Caco-2 (cell line): ENCODE measurements at regions of chr6 and their contacts with region 1.

Region 1: GRCh38 chr6:75029333-75029732 is 176.5 kb downstream of the COL12A1 start:
- DNase-seq: no peak
- H3K4me3 ChIP-seq: no peak overlapping the region
- H3K4me3 Mint-ChIP-seq: no peak overlapping the region
- H3K27ac Mint-ChIP-seq: no peak overlapping the region
- H3K4me1 ChIP-seq: no peaks in the 10 kb centered on the region
- H3K4me1 Mint-ChIP-seq: no peaks in the 10 kb centered on the region
- H3K27me3 ChIP-seq: no peaks in the 10 kb centered on the region
- H3K27me3 Mint-ChIP-seq: no peaks in the 10 kb centered on the region
- CTCF ChIP-seq: no peak

Region 2: GRCh38 chr6:74447013-74447412 is 582.3 kb before region 1 on chr6:
- CTCF ChIA-PET with region 1: no interaction called
- POLR2A ChIA-PET with region 1: no interaction called
- intact Hi-C with region 1: no loop called
- DNase-seq: no peak
- H3K4me3 ChIP-seq: no peak overlapping the region
- H3K4me3 Mint-ChIP-seq: no peak overlapping the region
- H3K27ac Mint-ChIP-seq: no peak overlapping the region
- H3K4me1 ChIP-seq: no peaks in the 10 kb centered on the region
- H3K4me1 Mint-ChIP-seq: no peaks in the 10 kb centered on the region
- H3K27me3 ChIP-seq: no peaks in the 10 kb centered on the region
- H3K27me3 Mint-ChIP-seq: no peaks in the 10 kb centered on the region
- CTCF ChIP-seq: no peak

Region 3: DNA sequence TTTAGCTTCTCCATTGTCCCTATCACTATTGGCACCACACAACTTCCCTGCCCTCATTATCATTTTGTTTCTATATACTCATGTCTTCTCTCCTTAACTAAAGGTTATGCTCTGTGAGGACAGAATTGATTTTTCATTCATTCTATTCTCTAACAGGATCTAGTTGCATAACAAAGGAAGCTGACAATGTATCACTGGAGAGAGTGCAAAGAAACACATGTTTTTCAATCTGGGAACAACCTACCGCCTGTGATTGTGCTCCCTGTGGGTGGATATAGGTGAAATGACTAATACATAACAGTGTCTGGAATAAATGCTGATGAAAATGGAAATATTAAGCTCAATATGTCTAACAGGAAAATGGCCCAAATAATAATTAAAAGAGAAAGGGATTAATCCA is 119.9 kb after region 1 on chr6:
- CTCF ChIA-PET with region 1: no interaction called
- POLR2A ChIA-PET with region 1: interaction called, 10 read pairs
- intact Hi-C with region 1: no loop called
- DNase-seq: no peak
- H3K4me3 ChIP-seq: no peak overlapping the region
- H3K4me3 Mint-ChIP-seq: no peak overlapping the region
- H3K27ac Mint-ChIP-seq: no peak overlapping the region
- H3K4me1 ChIP-seq: no peaks in the 10 kb centered on the region
- H3K4me1 Mint-ChIP-seq: no peaks in the 10 kb centered on the region
- H3K27me3 ChIP-seq: no peaks in the 10 kb centered on the region
- H3K27me3 Mint-ChIP-seq: no peaks in the 10 kb centered on the region
- CTCF ChIP-seq: no peak